WTC11 (cell line): ENCODE measurements at regions of chr19 and their contacts with region 1.

Region 1: DNA sequence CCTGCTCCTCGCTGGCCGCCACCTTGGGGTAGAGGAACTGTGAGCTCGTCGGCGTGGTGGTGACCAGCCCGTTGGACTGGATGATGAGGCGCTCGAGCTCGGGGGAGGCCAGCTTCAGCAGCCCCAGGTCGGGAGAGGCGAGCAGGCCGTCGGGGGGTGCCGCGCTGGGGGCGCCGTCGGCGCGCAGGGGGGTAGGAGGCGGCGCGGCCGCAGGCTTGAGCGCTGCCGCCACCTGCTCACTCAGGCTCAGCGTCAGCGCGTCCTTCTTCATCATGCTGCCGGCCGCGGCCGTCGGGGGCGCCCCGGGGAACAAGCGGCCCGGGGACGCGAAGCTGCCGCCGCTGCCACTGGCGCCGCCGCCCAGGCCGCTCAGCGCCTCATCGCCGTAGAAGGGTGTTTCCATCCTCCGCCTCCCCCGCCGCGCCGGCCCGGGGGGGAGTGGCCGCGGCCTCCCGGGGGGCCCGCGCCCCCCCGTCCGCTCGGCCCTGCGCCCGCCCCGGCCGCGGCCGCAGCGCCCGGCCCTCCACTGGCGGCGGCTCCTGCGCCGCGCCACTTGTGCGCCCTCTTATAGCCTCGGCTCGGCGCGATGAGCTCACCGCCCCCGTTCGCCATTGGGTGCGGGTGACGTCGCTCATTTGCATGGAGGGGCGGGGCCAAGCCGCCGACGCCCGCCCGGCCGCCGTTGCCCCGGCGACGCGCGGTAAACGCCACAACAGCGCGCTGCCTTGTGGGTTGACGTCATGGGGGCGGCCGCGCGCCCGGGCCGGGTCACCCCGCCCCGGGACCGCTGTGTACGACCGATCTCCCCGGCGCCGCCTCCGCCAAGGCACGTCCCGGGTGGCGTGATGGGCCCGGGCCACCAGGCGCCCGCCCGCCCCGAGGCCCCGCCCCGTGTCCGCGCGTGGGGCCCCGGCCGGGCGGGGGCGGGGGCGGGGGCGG is at the start of gene JUND:
- DNase-seq: peak; percentile 94
- ATAC-seq: peak; percentile 63
- H3K4me3 Mint-ChIP-seq: peak within 1 kb of the TSS; percentile 96
- H3K27ac Mint-ChIP-seq: peak within 1 kb of the TSS; percentile 98
- H3K4me1 Mint-ChIP-seq: peaks cover 31% of the 10 kb centered on the region
- H3K27me3 Mint-ChIP-seq: peaks cover 4% of the 10 kb centered on the region
- CTCF ChIP-seq: no peak
- total RNA-seq, gene JUND: 121 to 137 TPM (median 133 TPM) in 3 replicates

Region 2: DNA sequence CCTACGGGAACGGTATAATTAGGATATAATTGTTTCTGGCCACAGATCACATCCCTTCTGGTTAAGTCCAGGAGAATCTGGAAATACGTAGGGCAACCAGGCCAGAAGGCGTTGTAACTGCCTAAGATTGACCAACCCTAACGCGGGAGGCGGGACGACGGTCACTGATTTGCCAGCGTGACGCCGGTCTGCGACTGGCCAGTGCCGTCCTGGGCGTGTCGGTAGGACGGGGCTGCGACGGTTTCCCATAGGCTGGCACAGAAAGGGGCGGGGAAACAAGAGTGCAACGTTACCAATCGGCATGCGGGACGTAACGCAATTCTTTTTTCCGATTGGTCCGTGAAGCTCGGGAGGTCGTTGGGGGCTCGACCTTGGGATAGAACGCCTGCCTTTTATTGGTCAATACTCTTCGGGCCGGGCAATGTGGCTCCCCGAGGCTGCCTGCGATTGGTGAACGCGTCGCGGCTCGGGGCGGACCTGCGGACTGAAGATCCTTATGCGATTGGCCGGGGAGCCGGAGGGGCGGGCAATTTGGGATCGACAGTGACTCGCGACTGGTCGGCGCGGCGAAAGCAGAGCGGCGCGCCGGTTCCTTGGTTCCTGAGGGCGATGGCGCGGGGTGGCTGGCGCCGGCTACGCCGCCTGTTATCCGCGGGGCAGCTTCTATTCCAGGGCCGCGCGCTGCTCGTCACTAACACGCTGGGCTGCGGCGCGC is 88.5 kb before region 1 on chr19 and contains the start of gene MPV17L2:
- CTCF ChIA-PET with region 1: interaction called, 43 read pairs
- POLR2A ChIA-PET with region 1: interaction called, 9 read pairs
- DNase-seq: peak; percentile 99
- ATAC-seq: peak; percentile 94
- H3K4me3 Mint-ChIP-seq: peak within 1 kb of the TSS; percentile 82
- H3K27ac Mint-ChIP-seq: peak within 1 kb of the TSS; percentile 97
- H3K4me1 Mint-ChIP-seq: peaks cover 20% of the 10 kb centered on the region
- H3K27me3 Mint-ChIP-seq: peaks cover 2% of the 10 kb centered on the region; the same call in 1 of the 2 replicates
- CTCF ChIP-seq: no peak
- total RNA-seq, gene MPV17L2: 26.3 to 29.8 TPM (median 28.0 TPM) in 3 replicates

Region 3: GRCh38 chr19:18233224-18233825 is 48.0 kb before region 1 on chr19:
- CTCF ChIA-PET with region 1: interaction called, 57 read pairs
- POLR2A ChIA-PET with region 1: interaction called, 18 read pairs
- DNase-seq: peak; percentile 93
- ATAC-seq: peak; percentile 79
- H3K4me3 Mint-ChIP-seq: peak overlapping the region; percentile 78
- H3K27ac Mint-ChIP-seq: no peak overlapping the region
- H3K4me1 Mint-ChIP-seq: peaks cover 31% of the 10 kb centered on the region
- H3K27me3 Mint-ChIP-seq: peaks cover 12% of the 10 kb centered on the region
- CTCF ChIP-seq: no peak

Region 4: DNA sequence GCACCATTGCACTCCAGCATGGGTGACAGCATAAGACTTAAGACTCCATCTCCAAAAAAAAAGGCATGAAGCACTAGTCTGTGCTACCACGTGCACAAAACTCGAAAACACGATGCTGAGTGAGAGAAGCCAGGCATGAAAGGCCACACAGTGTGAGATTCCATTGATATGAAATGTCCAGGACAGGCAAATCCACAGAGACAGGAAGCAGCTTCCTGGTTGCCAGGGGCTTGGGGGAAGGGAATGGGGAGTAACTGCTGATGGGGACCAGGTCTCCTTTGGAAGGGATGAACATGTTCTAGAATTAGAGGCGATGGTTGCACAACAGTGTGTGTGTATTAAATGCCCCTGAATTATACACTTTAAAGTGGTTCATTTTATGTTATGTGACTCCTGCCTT is 16.0 kb after region 1 on chr19:
- CTCF ChIA-PET with region 1: interaction called, 102 read pairs
- POLR2A ChIA-PET with region 1: interaction called, 200 read pairs
- DNase-seq: no peak
- ATAC-seq: no peak
- H3K4me3 Mint-ChIP-seq: no peak overlapping the region
- H3K27ac Mint-ChIP-seq: peak overlapping the region; percentile 64; the same call in 1 of the 2 replicates
- H3K4me1 Mint-ChIP-seq: peaks cover 21% of the 10 kb centered on the region
- H3K27me3 Mint-ChIP-seq: no peaks in the 10 kb centered on the region; the same call in 1 of the 2 replicates
- CTCF ChIP-seq: no peak

Region 5: GRCh38 chr19:18328340-18329034 is 47.1 kb after region 1 on chr19:
- CTCF ChIA-PET with region 1: interaction called, 190 read pairs
- POLR2A ChIA-PET with region 1: interaction called, 51 read pairs
- DNase-seq: peak; percentile 91
- ATAC-seq: peak; percentile 99
- H3K4me3 Mint-ChIP-seq: peak overlapping the region; percentile 70
- H3K27ac Mint-ChIP-seq: peak overlapping the region; percentile 89
- H3K4me1 Mint-ChIP-seq: peaks cover 19% of the 10 kb centered on the region
- H3K27me3 Mint-ChIP-seq: no peaks in the 10 kb centered on the region; the same call in none of the 2 replicates
- CTCF ChIP-seq: peak; percentile 86

Region 6: GRCh38 chr19:18349524-18350128 is 68.3 kb after region 1 on chr19:
- CTCF ChIA-PET with region 1: interaction called, 21 read pairs
- POLR2A ChIA-PET with region 1: interaction called, 18 read pairs
- DNase-seq: peak; percentile 71
- ATAC-seq: 0 out of 2 replicates have a peak, but pooled peaks have one; percentile 40
- H3K4me3 Mint-ChIP-seq: no peak overlapping the region
- H3K27ac Mint-ChIP-seq: peak overlapping the region; percentile 19; the same call in 1 of the 2 replicates
- H3K4me1 Mint-ChIP-seq: peaks cover 27% of the 10 kb centered on the region
- H3K27me3 Mint-ChIP-seq: no peaks in the 10 kb centered on the region
- CTCF ChIP-seq: 0 out of 2 replicates have a peak, but pooled peaks have one; percentile 18

Region 7: DNA sequence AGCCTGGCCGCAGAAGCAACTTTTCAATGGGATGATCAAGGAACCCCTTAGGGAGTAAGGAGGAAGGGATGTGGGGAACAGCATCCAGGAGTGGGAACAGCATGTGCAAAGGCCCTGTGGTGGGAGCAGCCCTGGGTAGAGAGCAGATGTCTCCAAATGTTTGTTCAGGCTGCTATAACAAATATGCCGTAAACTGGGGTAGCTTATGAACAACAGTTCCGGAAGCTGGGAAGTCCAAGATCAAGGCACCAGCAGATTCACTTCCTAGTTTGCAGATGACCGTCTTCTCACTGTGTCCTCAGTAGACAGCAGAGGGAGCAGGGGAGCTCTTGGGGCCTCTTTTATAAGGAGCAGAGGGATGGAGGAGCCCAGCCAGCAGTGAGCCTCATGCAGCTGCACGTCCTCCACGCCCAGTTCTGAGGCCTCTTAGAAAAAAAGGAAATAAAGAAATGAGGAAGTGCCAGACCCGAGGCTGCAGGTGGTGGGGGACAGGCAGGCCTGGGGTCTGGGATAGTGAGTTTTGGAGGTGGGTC is 120.3 kb after region 1 on chr19:
- CTCF ChIA-PET with region 1: interaction called, 21 read pairs
- POLR2A ChIA-PET with region 1: interaction called, 3 read pairs
- DNase-seq: no peak
- ATAC-seq: peak; percentile 87
- H3K4me3 Mint-ChIP-seq: no peak overlapping the region
- H3K27ac Mint-ChIP-seq: no peak overlapping the region
- H3K4me1 Mint-ChIP-seq: peaks cover 8% of the 10 kb centered on the region
- H3K27me3 Mint-ChIP-seq: peaks cover 3% of the 10 kb centered on the region; the same call in 1 of the 2 replicates
- CTCF ChIP-seq: no peak

Region 8: DNA sequence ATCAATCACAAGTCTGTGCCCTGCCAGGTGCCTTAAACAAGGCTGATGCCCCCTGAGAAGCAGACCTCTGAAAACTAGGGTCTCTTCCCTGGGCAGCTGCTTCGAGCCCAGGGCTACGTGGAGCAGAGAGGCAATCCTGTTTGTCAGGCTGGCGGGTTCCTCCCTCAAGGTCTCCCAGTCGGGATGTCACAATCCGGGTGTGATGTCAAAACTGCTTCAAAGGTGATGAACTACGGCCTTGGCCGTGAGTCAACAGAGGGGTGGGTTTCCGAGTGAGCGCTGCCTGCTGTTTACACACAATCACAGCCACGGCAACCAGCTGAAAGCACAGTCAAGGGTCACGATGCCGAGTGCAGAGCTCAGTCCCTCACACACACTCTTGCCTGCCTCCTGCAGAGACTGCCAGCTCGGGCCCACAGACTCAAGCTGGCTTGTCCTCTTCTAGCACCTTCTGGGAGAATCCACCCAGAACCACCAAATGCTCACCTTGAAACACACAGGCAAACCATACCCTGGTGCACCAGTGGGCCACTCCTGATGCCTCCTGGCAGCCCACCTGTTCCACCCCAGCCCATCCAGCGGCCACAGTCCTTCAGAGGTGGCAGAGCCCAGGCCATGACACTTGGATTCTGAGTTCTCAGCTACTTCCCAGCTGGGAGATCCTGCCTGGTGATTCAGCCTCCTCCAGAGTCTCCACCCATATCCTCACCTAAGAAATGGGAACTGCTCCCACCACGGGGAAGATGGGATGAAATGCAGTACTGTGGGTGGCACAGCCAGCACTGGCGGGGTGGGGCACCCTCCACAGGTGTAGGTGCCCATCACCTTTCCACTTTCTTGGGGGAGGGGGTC is 233.7 kb after region 1 on chr19:
- CTCF ChIA-PET with region 1: no interaction called
- POLR2A ChIA-PET with region 1: no interaction called
- DNase-seq: no peak
- ATAC-seq: no peak
- H3K4me3 Mint-ChIP-seq: no peak overlapping the region
- H3K27ac Mint-ChIP-seq: peak overlapping the region; percentile 48
- H3K4me1 Mint-ChIP-seq: peaks cover 3% of the 10 kb centered on the region
- H3K27me3 Mint-ChIP-seq: no peaks in the 10 kb centered on the region
- CTCF ChIP-seq: no peak